ENCODE measurements at regions of chr20 and their contacts with region 1.

Region 1: DNA sequence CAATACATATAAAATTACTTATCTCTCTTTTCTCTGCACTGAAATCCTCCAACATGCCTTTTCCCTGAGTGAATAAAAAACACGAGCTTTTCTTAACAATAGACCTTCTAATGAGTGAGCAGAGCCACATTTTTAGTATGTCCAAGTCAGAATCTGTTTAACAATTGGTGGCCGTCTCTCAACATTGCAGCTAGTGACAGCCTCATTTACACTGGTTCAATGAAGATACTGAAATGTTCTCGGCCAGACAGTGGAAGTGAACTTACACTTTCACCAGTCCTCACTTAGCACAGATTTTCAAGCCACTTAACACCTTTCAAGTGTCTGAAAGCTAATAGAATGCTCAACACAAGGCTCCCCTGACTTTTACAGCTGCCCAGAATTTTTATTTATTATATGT is 767.1 kb downstream of the KIF16B start:
- DNase-seq: no peak
- ATAC-seq: no peak
- H3K4me3 Mint-ChIP-seq: peak overlapping the region; percentile 17
- H3K27ac Mint-ChIP-seq: peak overlapping the region; percentile 30
- H3K4me1 Mint-ChIP-seq: peaks cover 41% of the 10 kb centered on the region
- H3K27me3 Mint-ChIP-seq: no peaks in the 10 kb centered on the region
- CTCF ChIP-seq: no peak

Region 2: DNA sequence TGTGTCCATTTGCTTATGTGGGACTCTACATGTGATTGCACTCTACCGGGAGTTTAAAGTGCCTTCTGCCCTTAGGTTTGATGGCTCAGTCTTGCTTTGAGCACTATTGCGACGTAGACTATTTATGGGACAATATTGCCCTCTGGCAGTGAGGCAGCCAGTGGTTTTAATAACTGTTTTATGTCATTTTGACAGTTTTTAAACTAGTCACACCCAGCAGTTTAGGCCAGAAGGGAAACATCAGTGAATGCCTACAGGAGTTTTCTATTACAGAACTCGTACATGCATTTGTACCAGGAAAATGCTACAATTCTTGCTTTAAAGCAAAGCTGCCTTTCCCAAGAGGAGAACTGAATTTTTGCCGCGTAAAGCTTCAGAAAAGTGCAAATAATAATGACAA is 46.5 kb before region 1 on chr20:
- CTCF ChIA-PET with region 1: no interaction called
- POLR2A ChIA-PET with region 1: no interaction called
- intact Hi-C with region 1: loop called (anchors 5 kb)
- DNase-seq: no peak
- ATAC-seq: no peak
- H3K4me3 Mint-ChIP-seq: no peak overlapping the region
- H3K27ac Mint-ChIP-seq: no peak overlapping the region
- H3K4me1 Mint-ChIP-seq: peaks cover 23% of the 10 kb centered on the region
- H3K27me3 Mint-ChIP-seq: no peaks in the 10 kb centered on the region
- CTCF ChIP-seq: no peak

Region 3: DNA sequence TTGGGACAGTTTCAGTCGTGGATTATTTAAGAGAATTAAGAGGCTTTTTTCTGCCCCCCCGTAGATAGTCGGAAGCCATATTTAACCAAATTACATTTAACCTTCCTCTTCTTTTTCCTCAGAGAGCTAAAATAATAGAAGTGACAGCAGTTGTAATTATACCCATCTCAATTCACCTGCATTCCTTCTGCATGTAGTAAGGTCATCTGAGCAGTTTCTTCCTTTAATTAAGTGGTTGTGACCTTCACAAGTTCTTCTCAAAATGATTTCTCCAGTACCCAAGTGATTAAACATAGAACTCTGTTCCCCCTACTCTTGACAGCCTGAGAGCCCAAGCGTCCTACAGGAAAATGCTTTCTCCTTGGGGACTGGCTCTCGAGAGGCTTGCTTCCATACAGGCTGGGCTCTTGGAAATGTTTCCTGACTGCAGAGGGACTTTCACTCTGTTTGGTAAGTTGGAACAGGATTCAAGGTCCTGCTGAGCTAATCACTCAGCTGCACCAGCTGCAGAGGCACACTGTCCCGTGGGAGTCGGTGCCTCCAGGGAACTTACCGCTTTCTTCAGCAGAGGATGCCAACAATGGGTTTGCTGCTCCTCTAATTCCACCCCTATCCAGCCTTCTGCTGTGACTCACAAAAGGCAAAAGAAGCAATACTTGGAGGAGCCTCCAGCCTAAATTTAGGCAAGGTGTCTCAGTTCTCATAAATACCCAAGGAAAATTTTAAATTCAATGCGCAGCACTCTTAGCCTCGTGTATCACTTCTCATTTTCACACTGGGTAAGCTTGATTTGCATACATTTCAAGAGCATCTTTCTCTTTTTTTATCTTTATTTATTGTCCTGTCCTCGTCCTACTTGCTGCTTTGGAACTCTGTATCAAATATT is 352.2 kb after region 1 on chr20:
- CTCF ChIA-PET with region 1: no interaction called
- POLR2A ChIA-PET with region 1: no interaction called
- intact Hi-C with region 1: loop called (anchors 1 kb)
- DNase-seq: peak; percentile 48
- ATAC-seq: peak; percentile 85
- H3K4me3 Mint-ChIP-seq: peak overlapping the region; percentile 81
- H3K27ac Mint-ChIP-seq: peak overlapping the region; percentile 96
- H3K4me1 Mint-ChIP-seq: peaks cover 66% of the 10 kb centered on the region
- H3K27me3 Mint-ChIP-seq: no peaks in the 10 kb centered on the region
- CTCF ChIP-seq: no peak

Measured in activated B cell treated with CpG ODN at 0.5 μM for 24 hours (primary cell).